ENCODE measurements at regions of chr11 and their contacts with region 1.

Region 1: GRCh38 chr11:32172848-32173834 is 82.3 kb downstream of the RCN1 start:
- DNase-seq: peak; percentile 29 to 70 (median 52)
- H3K4me3 ChIP-seq: no peak overlapping the region
- H3K27ac ChIP-seq: no peak overlapping the region
- H3K4me1 ChIP-seq: no peaks in the 10 kb centered on the region
- H3K27me3 ChIP-seq: no peaks in the 10 kb centered on the region
- CTCF ChIP-seq: peak in 5 of 6 experiments; percentile 42 to 65 (median 54)
- POLR2A ChIP-seq: no peak

Region 2: DNA sequence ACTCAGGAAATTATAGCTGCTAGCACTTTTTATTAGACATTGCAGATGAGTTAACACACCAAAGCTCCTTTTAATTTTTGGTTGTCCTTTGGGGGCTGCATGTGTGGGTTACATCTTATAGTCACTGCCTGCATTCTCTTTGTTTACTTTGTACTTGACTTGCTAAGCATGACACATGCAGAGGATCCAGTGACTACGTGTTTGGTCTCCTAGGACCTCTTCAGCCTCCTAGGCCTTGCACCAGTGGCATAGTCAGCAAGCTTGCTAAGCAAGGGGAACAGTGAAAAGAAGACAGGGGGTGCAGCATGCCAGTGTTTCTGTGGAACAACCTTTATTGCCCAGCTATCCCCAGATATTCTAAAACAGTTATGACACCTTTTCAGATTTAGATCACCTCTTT is 470.2 kb before region 1 on chr11:
- intact Hi-C with region 1: no loop called
- DNase-seq: no peak
- H3K4me3 ChIP-seq: no peak overlapping the region
- H3K27ac ChIP-seq: no peak overlapping the region
- H3K4me1 ChIP-seq: no peaks in the 10 kb centered on the region
- H3K27me3 ChIP-seq: no peaks in the 10 kb centered on the region
- CTCF ChIP-seq: no peak
- POLR2A ChIP-seq: no peak

Region 3: DNA sequence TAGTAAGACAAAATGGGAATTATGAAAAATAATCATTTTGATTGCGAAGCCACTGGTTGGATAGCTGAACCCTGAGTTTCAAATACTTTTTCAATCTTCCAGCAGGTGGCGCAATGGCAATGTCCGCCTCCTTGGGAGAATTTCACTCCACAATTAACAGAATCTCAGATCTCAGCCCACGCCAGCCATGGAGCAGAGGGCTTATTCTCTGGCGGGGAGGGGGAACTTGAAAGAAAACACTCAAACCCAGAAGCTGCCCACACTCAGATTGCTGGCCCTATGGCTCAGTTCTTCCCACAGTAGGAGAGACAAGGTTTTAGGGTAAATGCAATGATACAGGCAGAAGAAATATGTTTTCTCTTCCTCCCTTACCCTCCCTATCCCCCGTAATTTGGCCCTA is 120.9 kb before region 1 on chr11:
- intact Hi-C with region 1: loop called (anchors 2 kb)
- DNase-seq: peak; percentile 29 to 76 (median 55)
- H3K4me3 ChIP-seq: no peak overlapping the region
- H3K27ac ChIP-seq: no peak overlapping the region
- H3K4me1 ChIP-seq: no peaks in the 10 kb centered on the region
- H3K27me3 ChIP-seq: peaks cover 4% of the 10 kb centered on the region
- CTCF ChIP-seq: peak; percentile 67 to 80 (median 78)
- POLR2A ChIP-seq: no peak

Measured in adrenal gland (tissue), 19 donors.